PC-3 (cell line): ENCODE measurements at regions of chr7 and their contacts with region 1.

Region 1: GRCh38 chr7:80705130-80705781 is 66.8 kb downstream of the CD36 start:
- DNase-seq: no peak
- ATAC-seq: peak; percentile 67
- H3K4me3 ChIP-seq: no peak overlapping the region
- H3K27ac ChIP-seq: no peak overlapping the region
- H3K4me1 ChIP-seq: no peaks in the 10 kb centered on the region
- H3K27me3 ChIP-seq: no peaks in the 10 kb centered on the region
- CTCF ChIP-seq: no peak

Region 2: DNA sequence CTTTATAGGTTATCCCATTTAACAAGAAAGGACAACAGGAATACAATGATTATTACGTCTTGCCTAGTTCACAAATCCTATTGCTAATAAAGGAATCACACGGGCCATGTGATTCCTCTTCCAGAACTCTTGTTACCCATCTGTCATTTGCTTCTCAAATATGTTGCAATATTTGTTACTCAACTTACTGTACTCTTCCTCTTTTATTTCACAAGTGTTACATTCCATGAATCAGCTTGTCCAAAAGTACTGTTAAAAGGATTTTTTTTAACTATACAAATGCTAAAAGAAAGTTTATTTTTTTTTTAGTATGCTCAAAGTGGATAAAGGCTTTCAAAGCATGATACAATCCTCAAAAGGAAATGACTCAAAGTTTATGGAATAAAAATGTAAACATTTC is 70.8 kb before region 1 on chr7:
- CTCF ChIA-PET with region 1: no interaction called
- POLR2A ChIA-PET with region 1: no interaction called
- intact Hi-C with region 1: no loop called
- DNase-seq: peak; percentile 78
- ATAC-seq: peak; percentile 95
- H3K4me3 ChIP-seq: no peak overlapping the region
- H3K27ac ChIP-seq: peak overlapping the region; percentile 46
- H3K4me1 ChIP-seq: peaks cover 16% of the 10 kb centered on the region
- H3K27me3 ChIP-seq: no peaks in the 10 kb centered on the region
- CTCF ChIP-seq: no peak

Region 3: GRCh38 chr7:80722616-80723141 is 17.4 kb after region 1 on chr7:
- CTCF ChIA-PET with region 1: no interaction called
- POLR2A ChIA-PET with region 1: no interaction called
- intact Hi-C with region 1: loop called (anchors 2 kb)
- DNase-seq: peak; percentile 98
- ATAC-seq: peak; percentile 98
- H3K4me3 ChIP-seq: peak overlapping the region; percentile 38; the same call in 1 of the 2 replicates
- H3K27ac ChIP-seq: peak overlapping the region; percentile 98
- H3K4me1 ChIP-seq: peaks cover 40% of the 10 kb centered on the region
- H3K27me3 ChIP-seq: no peaks in the 10 kb centered on the region
- CTCF ChIP-seq: no peak

Region 4: GRCh38 chr7:81111358-81111757 is 406.1 kb after region 1 on chr7:
- CTCF ChIA-PET with region 1: no interaction called
- POLR2A ChIA-PET with region 1: no interaction called
- intact Hi-C with region 1: no loop called
- DNase-seq: peak; percentile 66
- ATAC-seq: peak; percentile 38; the same call in 1 of the 2 replicates
- H3K4me3 ChIP-seq: no peak overlapping the region
- H3K27ac ChIP-seq: no peak overlapping the region
- H3K4me1 ChIP-seq: peaks cover 8% of the 10 kb centered on the region; the same call in 1 of the 2 replicates
- H3K27me3 ChIP-seq: no peaks in the 10 kb centered on the region
- CTCF ChIP-seq: no peak